Dorsolateral prefrontal cortex (tissue), 120 donors: ENCODE measurements at regions of chr2 and their contacts with region 1.

Region 1: DNA sequence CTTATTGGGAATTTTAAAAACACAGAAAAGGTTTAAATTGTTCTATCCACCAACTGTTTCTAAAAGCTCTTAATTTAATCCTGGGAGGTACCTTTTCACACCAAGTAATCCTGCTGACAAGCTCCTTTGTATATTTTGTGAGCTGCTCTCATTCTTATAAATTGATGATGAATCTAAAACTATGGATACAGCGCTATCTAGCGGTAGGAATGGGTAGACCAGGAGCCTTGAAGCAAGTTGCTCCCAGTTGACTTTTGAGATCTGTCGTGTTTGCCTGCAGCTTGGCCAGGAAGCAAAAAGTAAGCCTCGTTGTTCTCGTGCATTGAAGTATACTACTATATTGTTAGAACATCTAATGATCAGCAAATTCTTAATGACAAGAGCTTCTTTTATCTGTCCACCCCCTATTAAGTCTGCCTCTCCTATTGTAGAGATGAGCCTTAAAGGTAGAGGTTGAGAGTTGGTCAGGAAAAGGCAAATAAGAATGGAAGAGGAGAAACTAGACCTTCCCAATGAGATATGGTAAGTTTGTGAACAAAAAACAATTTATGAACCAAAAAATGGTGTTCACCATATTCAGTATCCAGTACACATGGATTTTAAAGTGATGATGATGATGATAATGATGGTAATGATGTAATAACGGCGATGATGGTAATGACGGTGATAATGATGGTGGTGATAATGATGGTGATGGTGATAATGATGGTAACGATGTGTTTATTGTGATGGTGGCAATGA is 212.0 kb upstream of the NCKAP5 start:
- DNase-seq: peak in 4 of 10 donors; percentile 38 to 64 (median 50)
- H3K4me3 ChIP-seq: no peak overlapping the region
- H3K27ac ChIP-seq: no peak overlapping the region
- H3K27me3 ChIP-seq: no peaks in the 10 kb centered on the region
- CTCF ChIP-seq: peak; percentile 79 to 99 (median 92)

Region 2: GRCh38 chr2:132547074-132547687 is 1233.1 kb before region 1 on chr2:
- intact Hi-C with region 1: loop called in 1 of 2 experiments (anchors 5 kb)
- DNase-seq: peak; percentile 46 to 89 (median 70)
- H3K4me3 ChIP-seq: no peak overlapping the region
- H3K27ac ChIP-seq: no peak overlapping the region
- H3K27me3 ChIP-seq: peaks cover 0 to 4% (median 0%) of the 10 kb centered on the region in 45 donors
- CTCF ChIP-seq: peak; percentile 73 to 92 (median 83)

Region 3: DNA sequence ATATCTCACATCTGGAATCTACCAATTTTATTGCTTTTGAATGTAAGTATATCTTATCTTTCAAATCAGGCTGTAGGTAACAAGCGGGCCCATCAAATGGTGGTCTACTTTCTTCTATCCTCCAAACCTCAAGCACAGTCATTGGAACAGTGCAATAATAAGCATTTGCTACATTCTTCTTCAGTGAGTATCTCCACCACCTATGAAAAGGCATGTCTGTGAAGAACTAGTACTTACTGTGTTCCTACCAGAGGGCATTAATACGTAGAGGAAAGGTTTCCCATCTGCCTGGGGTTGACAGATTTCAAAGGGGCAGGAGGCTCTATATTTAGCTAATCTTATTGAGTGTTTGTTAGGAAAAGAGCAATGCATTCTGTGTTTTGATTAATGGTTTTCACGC is 623.1 kb before region 1 on chr2:
- intact Hi-C with region 1: no loop called
- DNase-seq: no peak
- H3K4me3 ChIP-seq: no peak overlapping the region
- H3K27ac ChIP-seq: no peak overlapping the region
- H3K27me3 ChIP-seq: no peaks in the 10 kb centered on the region
- CTCF ChIP-seq: peak in 1 of 56 donors; percentile 13

Region 4: GRCh38 chr2:133266041-133266925 is 514.0 kb before region 1 on chr2:
- intact Hi-C with region 1: loop called in 1 of 2 experiments (anchors 10 kb)
- DNase-seq: peak in 2 of 10 donors; percentile 10 to 42
- H3K4me3 ChIP-seq: peak overlapping the region; percentile 20 to 75 (median 61)
- H3K27ac ChIP-seq: peak overlapping the region in 5 of 59 donors; percentile 27 to 60 (median 36)
- H3K27me3 ChIP-seq: peaks cover 0 to 6% (median 0%) of the 10 kb centered on the region in 45 donors
- CTCF ChIP-seq: peak in 1 of 56 donors; percentile 9

Region 5: DNA sequence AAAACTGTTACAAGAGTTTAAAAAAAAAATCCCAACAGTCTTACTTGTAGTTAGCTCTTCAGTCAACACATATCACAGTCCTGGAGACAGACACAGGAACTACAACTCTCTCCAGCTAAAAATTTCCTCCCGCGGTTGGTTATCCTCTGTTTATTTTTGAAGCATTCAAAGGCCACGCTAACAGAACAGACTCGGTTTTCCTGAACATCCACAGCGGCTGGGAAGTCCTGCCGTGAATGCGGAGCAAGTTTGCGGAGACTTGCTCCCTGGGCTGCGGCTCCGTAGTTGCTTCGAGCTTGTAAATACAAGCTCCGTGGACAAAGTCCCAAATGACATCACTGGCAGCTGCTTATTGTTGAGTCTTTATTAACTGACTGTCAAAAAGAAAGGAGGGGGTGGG is 212.1 kb before region 1 on chr2 and contains the start of gene NCKAP5:
- intact Hi-C with region 1: loop called (anchors 5 to 10 kb)
- DNase-seq: peak in 5 of 10 donors; percentile 7 to 66 (median 50)
- H3K4me3 ChIP-seq: peak within 1 kb of the TSS; percentile 7 to 72 (median 46)
- H3K27ac ChIP-seq: peak within 1 kb of the TSS in 35 of 59 donors; percentile 1 to 60 (median 34)
- H3K27me3 ChIP-seq: peaks cover 0 to 10% (median 0%) of the 10 kb centered on the region in 45 donors
- CTCF ChIP-seq: peak in 7 of 56 donors; percentile 4 to 33 (median 17)
- total RNA-seq, gene NCKAP5: 4.8 to 63.8 (median 20.6) TPM

Region 6: DNA sequence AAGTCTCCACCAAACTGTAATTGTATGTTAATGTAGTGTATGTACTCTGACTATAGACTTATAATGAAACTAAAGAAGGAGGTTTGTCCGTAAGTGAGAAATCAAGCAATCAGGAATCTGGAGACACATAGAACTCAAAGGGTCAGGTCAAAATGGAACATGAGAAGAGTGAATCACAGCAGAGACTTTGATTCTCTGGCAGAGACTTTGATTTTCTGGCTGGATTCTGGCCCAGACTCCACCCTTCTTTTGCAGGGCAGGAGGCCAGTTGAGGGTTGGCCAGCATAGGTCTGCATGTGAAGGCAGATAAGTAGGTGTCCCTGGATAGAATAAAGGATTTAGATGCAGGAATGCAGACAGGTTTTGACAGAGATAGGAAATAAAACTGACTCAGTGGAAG is 201.0 kb before region 1 on chr2:
- intact Hi-C with region 1: loop called in 1 of 2 experiments (anchors 10 kb)
- DNase-seq: no peak
- H3K4me3 ChIP-seq: no peak overlapping the region
- H3K27ac ChIP-seq: no peak overlapping the region
- H3K27me3 ChIP-seq: no peaks in the 10 kb centered on the region
- CTCF ChIP-seq: no peak

Region 7: GRCh38 chr2:133641497-133641896 is 138.8 kb before region 1 on chr2:
- intact Hi-C with region 1: loop called in 1 of 2 experiments (anchors 2 kb)
- DNase-seq: peak in 9 of 10 donors; percentile 39 to 77 (median 74)
- H3K4me3 ChIP-seq: peak overlapping the region in 53 of 59 donors; percentile 3 to 65 (median 41)
- H3K27ac ChIP-seq: peak overlapping the region; percentile 61 to 96 (median 87)
- H3K27me3 ChIP-seq: no peaks in the 10 kb centered on the region
- CTCF ChIP-seq: peak in 45 of 56 donors; percentile 7 to 59 (median 34)

Region 8: GRCh38 chr2:133674433-133675331 is 105.6 kb before region 1 on chr2:
- intact Hi-C with region 1: loop called in 1 of 2 experiments (anchors 10 kb)
- DNase-seq: peak; percentile 20 to 87 (median 76)
- H3K4me3 ChIP-seq: peak overlapping the region; percentile 12 to 68 (median 52)
- H3K27ac ChIP-seq: peak overlapping the region; percentile 67 to 94 (median 88)
- H3K27me3 ChIP-seq: no peaks in the 10 kb centered on the region
- CTCF ChIP-seq: peak in 2 of 56 donors; percentile 18